Right lobe of liver (tissue), 6 donors: ENCODE measurements at regions of chr16 and their contacts with region 1.

Region 1: DNA sequence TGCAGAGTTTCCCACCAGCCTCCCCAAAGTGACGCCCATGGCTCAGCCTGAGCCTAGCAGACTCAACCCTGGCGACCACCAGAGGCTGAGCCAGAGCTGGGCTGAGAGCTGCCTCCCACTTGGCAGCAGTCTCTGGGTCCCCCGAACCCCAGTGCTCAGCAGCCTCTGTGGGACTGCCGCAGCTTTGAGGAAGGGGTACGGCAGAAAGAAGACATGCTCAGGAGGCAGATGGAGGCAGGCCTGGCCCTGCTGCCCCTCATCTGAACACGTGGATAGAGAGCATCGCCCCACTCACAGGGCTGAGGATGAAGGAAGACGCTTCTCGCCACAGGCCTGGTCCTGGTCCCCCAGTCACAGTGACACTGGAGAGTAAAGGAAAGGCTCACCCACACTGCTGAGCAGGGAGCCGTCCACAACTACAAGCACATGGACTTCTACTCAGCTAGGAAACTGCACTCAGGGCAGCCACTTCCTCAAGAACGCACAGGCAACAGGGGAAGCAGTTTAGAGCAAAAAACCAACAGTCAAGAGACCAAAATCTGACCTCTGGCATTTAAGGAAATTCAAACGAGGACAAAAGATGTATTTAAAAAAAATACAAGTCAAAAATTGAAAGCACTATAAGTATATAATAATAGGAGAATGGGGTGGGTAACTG is 45.2 kb upstream of the GSG1L start:
- DNase-seq: no peak
- ATAC-seq: peak in 1 of 4 donors; percentile 20
- H3K4me3 ChIP-seq: no peak overlapping the region
- H3K27ac ChIP-seq: no peak overlapping the region
- H3K4me1 ChIP-seq: peaks cover 0 to 22% (median 10%) of the 10 kb centered on the region in 4 donors
- H3K27me3 ChIP-seq: no peaks in the 10 kb centered on the region
- CTCF ChIP-seq: no peak
- POLR2A ChIP-seq: no peak

Region 2: DNA sequence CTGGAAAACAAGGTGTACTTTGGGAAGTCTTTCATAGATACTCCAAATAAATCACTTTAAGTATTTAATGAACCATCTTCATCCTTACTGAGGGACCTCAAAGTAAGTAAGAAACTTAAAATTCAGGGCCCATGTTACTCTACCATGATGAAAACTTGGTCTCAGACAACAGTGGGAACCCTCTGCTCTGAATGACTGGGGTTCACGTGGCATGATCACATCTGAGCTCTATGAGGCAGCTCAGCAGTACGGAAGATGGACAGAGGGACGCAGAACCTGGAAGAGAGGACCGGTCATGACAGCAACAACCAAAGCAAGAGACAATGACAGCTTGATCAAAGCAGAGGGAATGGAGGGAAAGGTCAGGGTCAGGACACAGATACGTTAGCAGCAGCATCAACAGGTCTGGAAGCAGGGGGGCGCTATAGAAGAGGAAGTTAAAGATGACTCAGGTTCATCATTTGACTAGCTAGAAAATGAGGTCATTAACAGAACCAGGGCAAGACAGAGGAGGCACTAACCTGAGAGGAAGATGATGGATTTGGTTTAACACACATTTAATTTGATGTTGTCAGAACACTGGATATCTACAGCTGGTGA is 93.5 kb after region 1 on chr16:
- intact Hi-C with region 1: loop called in 1 of 2 experiments (anchors 10 kb)
- DNase-seq: no peak
- ATAC-seq: no peak
- H3K4me3 ChIP-seq: no peak overlapping the region
- H3K27ac ChIP-seq: no peak overlapping the region
- H3K4me1 ChIP-seq: no peaks in the 10 kb centered on the region
- H3K27me3 ChIP-seq: no peaks in the 10 kb centered on the region
- CTCF ChIP-seq: no peak
- POLR2A ChIP-seq: no peak